ENCODE measurements at regions of chr1 and their contacts with region 1.

Region 1: GRCh38 chr1:44049839-44050238 is 18.6 kb upstream of the SLC6A9 start:
- DNase-seq: peak in 1 of 2 experiments; percentile 50
- ATAC-seq: peak; percentile 49 to 65; a peak in 5 of 6 replicates
- H3K4me3 ChIP-seq: peak overlapping the region; percentile 34; the same call in 1 of the 3 replicates
- H3K27ac ChIP-seq: peak overlapping the region; percentile 86 to 91
- H3K4me1 ChIP-seq: peaks cover 33% of the 10 kb centered on the region
- CTCF ChIP-seq: no peak
- EP300 ChIP-seq: no peak
- POLR2A ChIP-seq: no peak
- RAD21 ChIP-seq: no peak

Region 2: GRCh38 chr1:43974443-43975248 is 75.2 kb before region 1 on chr1 and contains the start of gene ATP6V0B:
- CTCF ChIA-PET with region 1: interaction called, 10 read pairs
- POLR2A ChIA-PET with region 1: no interaction called
- DNase-seq: peak; percentile 87 to 91
- ATAC-seq: peak; percentile 73 to 85
- H3K4me3 ChIP-seq: peak within 1 kb of the TSS; percentile 95
- H3K27ac ChIP-seq: peak within 1 kb of the TSS; percentile 94 to 95
- H3K4me1 ChIP-seq: peaks cover 35% of the 10 kb centered on the region; the same call in 2 of the 3 replicates
- CTCF ChIP-seq: no peak
- EP300 ChIP-seq: no peak
- POLR2A ChIP-seq: peak; percentile 56
- RAD21 ChIP-seq: no peak
- polyA plus RNA-seq, gene ATP6V0B: 97.0 and 104 TPM in 2 replicates

Region 3: DNA sequence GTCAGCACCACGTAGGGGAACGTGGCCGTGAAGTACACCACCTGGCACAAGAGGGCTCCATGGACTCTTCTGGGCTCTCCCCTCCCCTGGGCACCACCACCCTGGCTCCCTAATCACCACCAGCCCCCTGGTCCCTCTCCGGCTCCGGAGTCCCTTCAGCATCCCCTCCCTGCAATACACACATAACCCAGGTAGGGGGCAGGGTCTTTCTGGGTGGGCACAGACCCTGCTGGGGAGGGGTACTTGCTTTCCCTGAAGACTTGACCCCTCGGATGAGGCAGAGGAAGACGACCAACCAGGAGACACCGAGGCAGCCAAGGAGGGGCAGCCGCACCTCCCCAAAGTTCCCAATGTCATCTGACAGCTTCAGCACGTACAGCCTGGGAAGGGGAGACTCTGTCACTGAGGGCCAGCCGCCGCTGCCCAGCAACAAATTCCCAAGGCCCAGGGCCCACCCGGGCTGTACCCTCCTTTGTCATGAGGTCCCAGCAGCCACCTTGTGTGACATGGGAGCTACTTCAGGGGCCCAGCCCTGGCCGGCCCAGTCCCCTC is 47.2 kb before region 1 on chr1:
- CTCF ChIA-PET with region 1: interaction called, 148 read pairs
- POLR2A ChIA-PET with region 1: no interaction called
- DNase-seq: no peak
- ATAC-seq: no peak
- H3K4me3 ChIP-seq: no peak overlapping the region
- H3K27ac ChIP-seq: no peak overlapping the region
- H3K4me1 ChIP-seq: peaks cover 4% of the 10 kb centered on the region; the same call in 1 of the 3 replicates
- CTCF ChIP-seq: no peak
- EP300 ChIP-seq: no peak
- POLR2A ChIP-seq: no peak
- RAD21 ChIP-seq: no peak

Region 4: GRCh38 chr1:44019466-44019948 is 30.3 kb before region 1 on chr1:
- CTCF ChIA-PET with region 1: interaction called, 15 read pairs
- POLR2A ChIA-PET with region 1: no interaction called
- DNase-seq: no peak
- ATAC-seq: no peak
- H3K4me3 ChIP-seq: no peak overlapping the region
- H3K27ac ChIP-seq: no peak overlapping the region
- H3K4me1 ChIP-seq: peaks cover 5% of the 10 kb centered on the region
- CTCF ChIP-seq: no peak
- EP300 ChIP-seq: no peak
- POLR2A ChIP-seq: no peak
- RAD21 ChIP-seq: no peak

Region 5: DNA sequence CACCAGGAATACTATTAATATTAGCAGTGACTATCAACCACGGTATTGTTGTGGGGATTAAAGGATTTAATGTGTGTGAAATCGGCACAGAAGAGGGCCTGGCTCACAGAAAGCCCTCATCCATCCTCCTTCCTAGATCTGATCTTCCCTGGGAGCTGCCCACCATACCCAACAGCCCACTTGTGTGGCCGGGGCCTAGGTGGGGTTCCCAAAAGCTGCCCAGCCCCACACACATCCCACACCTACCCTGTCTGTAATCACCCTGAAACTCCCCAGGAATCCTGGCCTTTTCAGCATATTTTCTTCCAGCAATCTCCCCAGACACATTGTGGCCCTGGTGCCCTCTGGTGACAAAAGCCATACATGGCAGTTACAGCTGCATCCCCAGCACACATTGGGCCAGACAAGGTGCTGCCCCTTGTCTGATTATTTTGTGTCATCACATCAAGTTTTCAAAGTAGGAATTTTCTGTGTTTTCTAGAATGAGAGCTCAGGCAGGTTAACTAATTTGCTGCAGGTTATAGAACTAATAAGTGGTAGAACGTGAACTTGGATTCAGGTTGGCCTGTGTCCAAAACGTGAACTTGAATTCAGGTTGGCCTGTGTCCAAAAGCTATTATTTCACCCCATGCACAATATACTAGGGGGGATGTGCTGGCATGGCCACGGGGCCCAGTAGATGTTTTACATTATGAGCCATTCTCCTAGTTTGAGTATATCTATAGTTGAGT is 13.3 kb before region 1 on chr1:
- CTCF ChIA-PET with region 1: interaction called, 68 read pairs
- POLR2A ChIA-PET with region 1: no interaction called
- DNase-seq: peak; percentile 48 to 67
- ATAC-seq: peak; percentile 85 to 89
- H3K4me3 ChIP-seq: no peak overlapping the region
- H3K27ac ChIP-seq: peak overlapping the region; percentile 63 to 77
- H3K4me1 ChIP-seq: peaks cover 30% of the 10 kb centered on the region
- CTCF ChIP-seq: peak; percentile 72
- EP300 ChIP-seq: no peak
- POLR2A ChIP-seq: no peak
- RAD21 ChIP-seq: peak; percentile 77 to 79

Region 6: DNA sequence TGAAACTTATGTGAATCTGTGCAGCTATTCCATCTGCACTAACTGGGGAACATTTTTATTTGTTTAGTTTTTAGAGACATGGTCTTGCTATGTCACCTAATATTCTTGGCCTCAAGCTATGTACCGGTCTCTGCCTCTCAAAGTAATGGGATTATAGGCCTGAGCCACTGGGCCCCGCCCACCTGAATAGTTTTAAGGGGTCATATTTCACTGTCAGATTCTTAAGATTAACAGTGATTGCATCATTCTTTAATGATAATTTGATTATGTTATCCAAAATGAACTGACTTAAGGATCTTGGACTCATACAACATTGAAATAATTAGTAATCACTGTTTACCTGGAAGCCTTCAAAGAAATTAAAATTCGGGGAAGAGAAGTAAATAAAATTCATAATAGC is 104.2 kb after region 1 on chr1:
- CTCF ChIA-PET with region 1: no interaction called
- POLR2A ChIA-PET with region 1: no interaction called
- DNase-seq: peak in 1 of 2 experiments; percentile 7
- ATAC-seq: no peak
- H3K4me3 ChIP-seq: no peak overlapping the region
- H3K27ac ChIP-seq: peak overlapping the region; percentile 70 to 81; a peak in 5 of 6 replicates
- H3K4me1 ChIP-seq: peaks cover 35% of the 10 kb centered on the region
- CTCF ChIP-seq: no peak
- EP300 ChIP-seq: no peak
- POLR2A ChIP-seq: no peak
- RAD21 ChIP-seq: no peak

Measured in A549 (cell line).